Activated CD4-positive, alpha-beta T cell treated with anti-CD3 and anti-CD28 coated beads, Interleukin-2, amount 10 ng/mL, durations not matched to agents 24 days and 14 days (primary cell): ENCODE measurements at regions of chr19 and their contacts with region 1.

Region 1: DNA sequence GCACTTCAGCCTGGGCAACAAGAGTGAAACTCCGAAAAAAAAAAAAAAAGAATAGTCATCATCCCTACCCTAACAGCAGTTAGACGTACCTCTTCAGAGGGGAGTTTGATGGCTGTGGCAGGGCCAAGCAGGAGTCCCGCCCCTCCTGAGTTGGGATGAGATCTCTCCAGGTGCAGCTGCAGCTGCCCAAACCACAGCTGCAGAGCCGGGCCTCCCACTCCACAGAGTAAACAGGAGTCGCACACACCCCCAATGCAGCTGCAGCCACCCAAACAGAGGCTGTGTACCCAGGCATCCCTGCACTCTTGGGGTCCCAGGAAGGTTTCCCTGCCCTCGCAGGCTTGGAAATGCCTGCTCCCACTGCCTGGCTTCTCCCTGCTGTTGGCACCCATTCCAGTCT is 17.4 kb upstream of the MLLT1 start:
- DNase-seq: no peak
- H3K4me3 Mint-ChIP-seq: no peak overlapping the region
- H3K27ac Mint-ChIP-seq: no peak overlapping the region
- H3K4me1 Mint-ChIP-seq: peaks cover 2% of the 10 kb centered on the region
- H3K27me3 Mint-ChIP-seq: peaks cover 3% of the 10 kb centered on the region

Region 2: DNA sequence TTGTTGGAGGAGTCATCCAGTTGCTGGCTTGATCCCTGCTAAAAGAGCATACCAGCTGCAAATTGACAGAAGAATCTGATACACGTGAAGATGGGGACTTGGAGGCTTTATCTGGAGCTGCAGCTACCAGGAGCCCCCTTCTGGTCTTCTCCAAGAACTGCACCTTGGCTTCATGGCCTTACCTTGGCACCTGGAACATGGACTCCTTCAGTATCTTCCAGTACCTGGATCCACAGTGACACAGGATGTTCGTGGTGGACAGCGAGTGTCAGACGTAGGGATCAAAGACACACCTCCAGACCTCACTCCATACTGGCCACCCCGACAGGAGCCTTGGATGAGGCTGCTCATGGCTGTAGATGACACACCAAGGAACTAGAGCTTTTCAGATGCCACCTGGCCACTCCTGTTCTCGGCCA is 171.6 kb before region 1 on chr19:
- intact Hi-C with region 1: loop called (anchors 2 kb)
- DNase-seq: peak; percentile 88
- H3K4me3 Mint-ChIP-seq: no peak overlapping the region
- H3K27ac Mint-ChIP-seq: no peak overlapping the region
- H3K4me1 Mint-ChIP-seq: peaks cover 7% of the 10 kb centered on the region
- H3K27me3 Mint-ChIP-seq: peaks cover 2% of the 10 kb centered on the region

Region 3: DNA sequence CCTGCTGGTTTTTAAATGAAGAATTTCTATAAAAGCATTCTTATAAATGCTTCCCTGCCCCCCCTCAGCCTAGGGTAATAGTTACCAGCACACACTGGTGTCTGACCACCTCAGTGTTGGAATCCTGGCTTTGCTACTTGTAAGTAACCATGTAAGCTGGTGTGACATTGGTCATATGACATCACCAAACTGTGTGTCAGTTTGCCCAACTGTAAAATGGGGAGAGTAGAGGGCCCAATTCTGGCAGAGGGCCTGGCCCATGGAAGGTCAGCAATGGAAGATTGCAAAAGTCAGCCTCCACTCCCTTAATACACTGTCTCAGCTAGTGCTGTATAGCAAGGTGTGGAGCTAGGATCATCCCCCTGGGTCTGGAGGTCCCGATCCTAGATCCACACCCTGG is 130.1 kb before region 1 on chr19:
- intact Hi-C with region 1: loop called (anchors 1 kb)
- DNase-seq: no peak
- H3K4me3 Mint-ChIP-seq: no peak overlapping the region
- H3K27ac Mint-ChIP-seq: no peak overlapping the region
- H3K4me1 Mint-ChIP-seq: no peaks in the 10 kb centered on the region
- H3K27me3 Mint-ChIP-seq: peaks cover 21% of the 10 kb centered on the region

Region 4: GRCh38 chr19:6218491-6219162 is 78.6 kb before region 1 on chr19:
- intact Hi-C with region 1: loop called (anchors 1 kb)
- DNase-seq: peak; percentile 95
- H3K4me3 Mint-ChIP-seq: no peak overlapping the region
- H3K27ac Mint-ChIP-seq: no peak overlapping the region
- H3K4me1 Mint-ChIP-seq: peaks cover 2% of the 10 kb centered on the region
- H3K27me3 Mint-ChIP-seq: no peaks in the 10 kb centered on the region